ENCODE measurements at regions of chr11 and their contacts with region 1.

Region 1: GRCh38 chr11:94183886-94184264 is 55.2 kb downstream of the PANX1 start:
- DNase-seq: no peak
- H3K4me3 ChIP-seq: no peak overlapping the region
- CTCF ChIP-seq: peak; percentile 86

Region 2: GRCh38 chr11:94134651-94135512 is 49.0 kb before region 1 on chr11:
- CTCF ChIA-PET with region 1: interaction called, 10 read pairs
- POLR2A ChIA-PET with region 1: no interaction called
- DNase-seq: peak; percentile 84
- H3K4me3 ChIP-seq: peak overlapping the region; percentile 38
- CTCF ChIP-seq: no peak

Region 3: GRCh38 chr11:94151903-94152677 is 31.8 kb before region 1 on chr11:
- CTCF ChIA-PET with region 1: interaction called, 13 read pairs
- POLR2A ChIA-PET with region 1: no interaction called
- DNase-seq: no peak
- H3K4me3 ChIP-seq: no peak overlapping the region
- CTCF ChIP-seq: no peak

Region 4: DNA sequence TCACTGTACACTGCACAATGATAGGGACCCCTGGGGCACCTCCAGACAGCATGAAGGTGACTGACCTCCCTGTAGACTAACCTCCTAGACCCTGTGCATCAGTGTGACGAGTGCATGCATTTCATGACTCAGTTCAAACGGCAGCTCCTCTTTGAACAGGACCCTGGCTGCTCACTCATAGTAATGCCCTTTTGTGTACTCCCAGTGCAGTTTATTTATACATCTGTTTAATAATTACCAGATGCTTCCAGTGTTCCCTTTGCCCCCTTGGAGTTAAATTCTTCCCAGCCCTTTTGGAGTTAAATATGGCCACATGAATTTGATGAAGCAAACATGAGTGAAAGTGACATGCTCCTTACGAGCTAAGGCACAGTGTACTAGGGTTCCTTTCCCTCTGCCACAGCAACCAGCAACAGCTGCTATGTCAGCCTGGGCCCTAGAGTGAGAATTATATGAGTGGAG is 17.2 kb after region 1 on chr11:
- CTCF ChIA-PET with region 1: interaction called, 30 read pairs
- POLR2A ChIA-PET with region 1: interaction called, 3 read pairs
- DNase-seq: peak; percentile 33
- H3K4me3 ChIP-seq: no peak overlapping the region
- CTCF ChIP-seq: no peak

Region 5: DNA sequence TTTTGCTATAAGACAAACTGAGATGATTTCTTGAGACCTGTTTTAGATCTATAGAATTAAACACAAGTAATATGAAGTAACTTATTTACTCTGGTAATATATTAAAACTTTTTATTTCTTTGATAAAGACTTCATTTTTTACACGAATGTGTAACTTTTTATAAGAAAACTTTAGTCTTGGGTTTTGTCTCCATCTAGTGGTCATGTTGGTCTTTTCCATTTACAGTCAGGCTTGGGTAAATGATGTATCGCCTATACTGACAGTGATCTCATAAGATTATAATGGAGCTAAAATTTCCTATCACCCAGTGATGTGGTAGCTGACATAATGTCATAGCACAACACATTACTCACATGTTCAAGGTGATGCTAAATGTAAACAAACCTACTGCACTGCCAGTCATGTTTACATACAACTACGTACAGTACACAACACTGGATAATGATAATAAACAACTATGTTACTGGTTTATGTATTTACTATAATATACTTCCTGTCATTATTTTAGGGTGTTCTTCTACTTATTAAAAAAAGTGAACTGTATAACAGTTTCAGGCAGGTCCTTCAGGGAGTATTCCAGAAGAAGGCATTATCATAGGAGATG is 320.9 kb after region 1 on chr11:
- CTCF ChIA-PET with region 1: interaction called, 42 read pairs
- POLR2A ChIA-PET with region 1: no interaction called
- DNase-seq: no peak
- H3K4me3 ChIP-seq: no peak overlapping the region
- CTCF ChIP-seq: peak; percentile 26

Measured in AG04449 (cell line).